CD8-positive, alpha-beta memory T cell (primary cell): ENCODE measurements at regions of chr15 and their contacts with region 1.

Region 1: DNA sequence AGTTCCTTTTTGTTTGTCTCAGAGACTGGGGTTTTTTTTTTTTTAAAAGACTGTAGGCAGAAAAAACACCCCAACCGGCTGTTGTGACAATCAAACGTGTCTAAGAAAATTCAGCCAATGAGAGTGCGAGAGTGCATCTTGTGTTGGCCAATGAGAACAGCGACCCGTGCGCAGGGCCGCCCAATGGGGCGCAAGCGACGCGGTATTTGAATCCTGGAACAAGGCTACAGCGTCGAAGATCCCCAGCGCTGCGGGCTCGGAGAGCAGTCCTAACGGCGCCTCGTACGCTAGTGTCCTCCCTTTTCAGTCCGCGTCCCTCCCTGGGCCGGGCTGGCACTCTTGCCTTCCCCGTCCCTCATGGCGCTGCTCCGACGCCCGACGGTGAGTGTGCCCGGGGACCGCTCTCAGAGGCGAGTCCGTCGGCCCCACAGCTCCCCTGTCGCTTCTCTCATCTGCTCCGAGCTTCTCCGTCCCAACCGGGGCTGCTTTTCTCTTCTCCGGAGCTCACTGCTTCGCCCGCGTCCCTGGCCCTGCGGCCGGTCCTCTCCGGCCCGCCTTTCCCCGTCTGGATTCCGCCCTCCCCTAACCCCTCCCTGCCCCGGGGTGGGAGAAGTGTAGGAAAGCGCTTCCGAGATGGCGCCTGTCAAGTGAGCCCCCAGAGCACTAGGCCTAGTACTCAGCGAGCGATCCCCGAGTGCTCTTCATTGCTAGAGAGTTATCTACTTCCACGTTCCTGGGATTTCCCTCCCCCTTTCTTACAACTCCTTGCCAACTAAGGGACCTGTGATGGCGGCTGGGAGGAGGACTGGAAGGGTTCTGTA is at the start of gene CCNB2:
- DNase-seq: peak; percentile 74 to 89 (median 83)
- H3K4me3 ChIP-seq: peak within 1 kb of the TSS; percentile 78
- H3K4me3 Mint-ChIP-seq: peak within 1 kb of the TSS; percentile 85 to 96 (median 94)
- H3K27ac ChIP-seq: peak within 1 kb of the TSS; percentile 77
- H3K27ac Mint-ChIP-seq: peak within 1 kb of the TSS; percentile 89 to 99 (median 96)
- H3K4me1 ChIP-seq: peaks cover 11% of the 10 kb centered on the region
- H3K4me1 Mint-ChIP-seq: peaks cover 13 to 20% (median 20%) of the 10 kb centered on the region in 3 donors
- H3K27me3 ChIP-seq: no peaks in the 10 kb centered on the region
- H3K27me3 Mint-ChIP-seq: peaks cover 0 to 4% of the 10 kb centered on the region in 2 donors
- total RNA-seq, gene CCNB2: 28.2 to 30.3 TPM

Region 2: GRCh38 chr15:58568157-58568571 is 537.0 kb before region 1 on chr15:
- CTCF ChIA-PET with region 1: no interaction called
- POLR2A ChIA-PET with region 1: interaction called, 11 read pairs
- DNase-seq: no peak
- H3K4me3 ChIP-seq: no peak overlapping the region
- H3K4me3 Mint-ChIP-seq: peak overlapping the region in 2 of 7 donors; percentile 2 to 44
- H3K27ac ChIP-seq: no peak overlapping the region
- H3K27ac Mint-ChIP-seq: peak overlapping the region in 6 of 8 donors; percentile 7 to 87 (median 79)
- H3K4me1 ChIP-seq: peaks cover 5% of the 10 kb centered on the region
- H3K4me1 Mint-ChIP-seq: peaks cover 8 to 12% (median 9%) of the 10 kb centered on the region in 3 donors
- H3K27me3 ChIP-seq: no peaks in the 10 kb centered on the region
- H3K27me3 Mint-ChIP-seq: peaks cover 0 to 2% of the 10 kb centered on the region in 2 donors